H1 (cell line): ENCODE measurements at regions of chr15 and their contacts with region 1.

Region 1: DNA sequence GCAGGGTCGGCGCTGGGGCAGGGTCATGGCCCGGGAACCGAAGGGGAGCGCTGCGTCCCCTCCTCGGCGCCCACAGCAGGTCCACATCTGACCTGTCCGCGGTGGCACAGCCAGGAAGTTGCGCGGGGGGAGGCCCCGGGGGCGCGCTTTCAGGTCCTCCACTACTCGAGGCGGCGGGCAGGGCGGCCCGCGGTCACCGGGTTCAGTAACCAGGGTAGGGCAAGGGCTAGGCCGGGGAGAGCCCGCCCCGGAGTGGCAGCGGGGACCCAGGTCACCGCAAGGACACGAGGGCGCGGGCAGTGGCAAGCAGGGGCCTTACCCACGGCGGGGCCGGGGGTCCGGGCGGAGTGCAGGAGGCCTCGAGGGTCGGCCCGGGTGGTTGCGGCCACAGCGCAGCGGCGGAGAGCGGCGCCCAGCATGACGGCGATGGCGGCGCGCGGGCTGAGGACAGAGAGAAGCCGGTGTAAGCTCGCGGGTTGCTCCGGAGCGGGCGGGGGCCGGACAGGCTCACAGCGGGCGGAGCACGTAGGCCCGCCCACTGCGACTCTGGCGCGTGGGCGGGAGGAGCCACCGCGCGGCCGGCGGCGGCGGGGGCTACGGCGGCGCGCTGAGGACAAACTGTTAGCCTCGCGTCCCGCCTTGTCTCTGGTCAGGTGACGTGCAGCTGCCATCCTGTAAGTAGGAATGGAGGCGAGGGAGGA is at the start of gene COX5A:
- DNase-seq: peak; percentile 87 to 90
- H3K4me3 ChIP-seq: peak within 1 kb of the TSS; percentile 84 to 91 (median 86)
- H3K27ac ChIP-seq: peak within 1 kb of the TSS; percentile 93; the same call in 1 of the 2 replicates
- H3K4me1 ChIP-seq: no peaks in the 10 kb centered on the region
- H3K27me3 ChIP-seq: no peaks in the 10 kb centered on the region
- CTCF ChIP-seq: no peak
- EP300 ChIP-seq: 0 out of 3 replicates have a peak, but pooled peaks of 1 of the 2 experiments have one; percentile 30
- POLR2A ChIP-seq: peak; percentile 72 to 73
- RAD21 ChIP-seq: no peak
- total RNA-seq, gene COX5A: 367 and 373 TPM in 2 replicates

Region 2: GRCh38 chr15:74950078-74951000 is 12.6 kb after region 1 on chr15:
- CTCF ChIA-PET with region 1: interaction called, 37 read pairs
- POLR2A ChIA-PET with region 1: interaction called, 15 read pairs
- DNase-seq: peak in 1 of 2 experiments; percentile 97
- H3K4me3 ChIP-seq: no peak overlapping the region
- H3K27ac ChIP-seq: no peak overlapping the region
- H3K4me1 ChIP-seq: peaks cover 3 to 19% (median 9%) of the 10 kb centered on the region in 4 experiments
- H3K27me3 ChIP-seq: peaks cover 0 to 6% (median 4%) of the 10 kb centered on the region in 4 experiments; a peak in 5 of 7 replicates
- CTCF ChIP-seq: peak; percentile 77 to 100 (median 90)
- EP300 ChIP-seq: no peak
- POLR2A ChIP-seq: no peak
- RAD21 ChIP-seq: peak; percentile 93

Region 3: GRCh38 chr15:75049392-75049791 is 111.6 kb after region 1 on chr15:
- CTCF ChIA-PET with region 1: no interaction called
- POLR2A ChIA-PET with region 1: no interaction called
- DNase-seq: no peak
- H3K4me3 ChIP-seq: no peak overlapping the region
- H3K27ac ChIP-seq: no peak overlapping the region
- H3K4me1 ChIP-seq: peaks cover 0 to 12% (median 8%) of the 10 kb centered on the region in 4 experiments; a peak in 5 of 7 replicates
- H3K27me3 ChIP-seq: no peaks in the 10 kb centered on the region
- CTCF ChIP-seq: no peak
- EP300 ChIP-seq: no peak
- POLR2A ChIP-seq: no peak
- RAD21 ChIP-seq: no peak